ENCODE measurements at regions of chr17 and their contacts with region 1.

Region 1: DNA sequence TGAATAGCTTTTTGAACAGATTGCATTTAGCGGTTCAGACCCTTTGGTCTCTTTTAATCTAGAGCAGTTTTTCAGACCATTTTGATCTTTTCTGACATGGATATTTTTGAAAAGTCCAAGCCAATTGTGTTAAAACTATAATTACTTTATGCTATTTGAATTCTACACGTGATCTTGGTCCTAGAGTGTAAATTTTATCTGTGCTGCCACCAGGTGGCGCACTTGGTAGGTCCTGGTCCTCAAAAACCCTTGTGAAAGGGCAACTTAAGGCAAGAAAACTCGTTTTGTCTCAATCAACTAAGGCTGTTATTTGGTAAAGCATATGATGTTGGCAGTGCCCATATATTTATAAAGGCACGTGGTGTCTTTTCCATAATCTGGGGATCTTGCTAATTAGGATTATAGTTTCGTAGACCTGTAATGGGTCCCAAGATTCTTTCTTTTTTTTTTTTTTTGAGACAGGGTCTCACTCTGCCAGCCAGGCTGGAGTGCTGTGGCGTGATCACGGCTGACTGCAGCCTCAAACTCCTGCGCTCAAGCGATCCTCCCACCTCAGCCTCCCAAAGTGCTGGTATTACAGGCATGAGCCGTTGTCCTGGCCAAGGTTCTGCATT is 43.9 kb upstream of the TEX2 start:
- DNase-seq: peak; percentile 59
- ATAC-seq: peak; percentile 63; the same call in 1 of the 2 replicates
- H3K4me3 Mint-ChIP-seq: no peak overlapping the region
- H3K27ac Mint-ChIP-seq: no peak overlapping the region
- H3K4me1 Mint-ChIP-seq: no peaks in the 10 kb centered on the region
- H3K27me3 Mint-ChIP-seq: no peaks in the 10 kb centered on the region
- CTCF ChIP-seq: peak; percentile 90

Region 2: GRCh38 chr17:64174686-64175456 is 132.1 kb before region 1 on chr17:
- CTCF ChIA-PET with region 1: no interaction called
- POLR2A ChIA-PET with region 1: no interaction called
- DNase-seq: no peak
- ATAC-seq: no peak
- H3K4me3 Mint-ChIP-seq: no peak overlapping the region
- H3K27ac Mint-ChIP-seq: no peak overlapping the region; the same call in 1 of the 2 replicates
- H3K4me1 Mint-ChIP-seq: no peaks in the 10 kb centered on the region
- H3K27me3 Mint-ChIP-seq: no peaks in the 10 kb centered on the region
- CTCF ChIP-seq: no peak

Region 3: DNA sequence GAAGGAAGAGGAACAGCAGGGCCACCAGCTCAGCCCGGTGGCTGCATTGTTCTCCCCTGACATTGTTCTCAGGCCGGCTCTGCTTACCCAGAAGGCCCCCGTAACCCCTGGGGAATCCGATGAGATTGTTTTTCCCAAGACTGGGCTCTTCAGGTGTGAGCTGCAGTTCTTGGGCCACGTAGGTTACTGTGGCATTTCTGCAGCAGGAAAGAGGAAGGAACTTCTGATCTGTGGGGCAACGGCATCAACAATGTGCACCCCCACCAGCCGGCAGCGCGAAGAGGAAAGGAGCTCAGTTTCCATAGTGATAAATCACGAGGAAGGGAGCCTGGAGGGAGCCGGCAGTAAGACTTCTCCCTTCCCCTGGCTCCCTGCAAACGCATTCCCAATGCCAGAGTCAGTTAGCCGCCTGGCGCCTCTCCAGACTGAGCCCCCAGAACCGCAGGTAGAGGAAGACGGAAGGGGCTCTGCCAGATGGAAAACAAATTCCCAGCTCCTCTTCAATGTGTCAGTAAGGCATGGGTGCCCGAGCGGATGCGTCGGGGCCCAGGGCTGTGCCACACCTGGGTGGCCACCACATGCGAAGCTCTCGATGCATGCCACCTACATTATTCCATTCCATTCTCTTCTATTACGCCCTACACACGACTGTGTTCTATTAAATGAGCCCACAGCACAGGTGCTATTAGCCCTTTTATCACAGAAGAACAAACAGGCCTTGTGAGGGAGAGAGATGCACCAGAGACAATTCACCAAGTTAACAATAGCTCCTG is 105.2 kb after region 1 on chr17:
- CTCF ChIA-PET with region 1: interaction called, 12 read pairs
- POLR2A ChIA-PET with region 1: no interaction called
- DNase-seq: peak; percentile 59
- ATAC-seq: peak; percentile 92
- H3K4me3 Mint-ChIP-seq: peak overlapping the region; percentile 62
- H3K27ac Mint-ChIP-seq: peak overlapping the region; percentile 90
- H3K4me1 Mint-ChIP-seq: peaks cover 31% of the 10 kb centered on the region
- H3K27me3 Mint-ChIP-seq: no peaks in the 10 kb centered on the region
- CTCF ChIP-seq: no peak